ENCODE measurements at regions of chr15 and their contacts with region 1.

Region 1: GRCh38 chr15:70679919-70680231 is 83.5 kb downstream of the UACA start:
- DNase-seq: no peak
- ATAC-seq: no peak
- H3K4me3 Mint-ChIP-seq: no peak overlapping the region
- H3K27ac Mint-ChIP-seq: no peak overlapping the region
- H3K4me1 Mint-ChIP-seq: peaks cover 2% of the 10 kb centered on the region
- H3K27me3 Mint-ChIP-seq: no peaks in the 10 kb centered on the region

Region 2: DNA sequence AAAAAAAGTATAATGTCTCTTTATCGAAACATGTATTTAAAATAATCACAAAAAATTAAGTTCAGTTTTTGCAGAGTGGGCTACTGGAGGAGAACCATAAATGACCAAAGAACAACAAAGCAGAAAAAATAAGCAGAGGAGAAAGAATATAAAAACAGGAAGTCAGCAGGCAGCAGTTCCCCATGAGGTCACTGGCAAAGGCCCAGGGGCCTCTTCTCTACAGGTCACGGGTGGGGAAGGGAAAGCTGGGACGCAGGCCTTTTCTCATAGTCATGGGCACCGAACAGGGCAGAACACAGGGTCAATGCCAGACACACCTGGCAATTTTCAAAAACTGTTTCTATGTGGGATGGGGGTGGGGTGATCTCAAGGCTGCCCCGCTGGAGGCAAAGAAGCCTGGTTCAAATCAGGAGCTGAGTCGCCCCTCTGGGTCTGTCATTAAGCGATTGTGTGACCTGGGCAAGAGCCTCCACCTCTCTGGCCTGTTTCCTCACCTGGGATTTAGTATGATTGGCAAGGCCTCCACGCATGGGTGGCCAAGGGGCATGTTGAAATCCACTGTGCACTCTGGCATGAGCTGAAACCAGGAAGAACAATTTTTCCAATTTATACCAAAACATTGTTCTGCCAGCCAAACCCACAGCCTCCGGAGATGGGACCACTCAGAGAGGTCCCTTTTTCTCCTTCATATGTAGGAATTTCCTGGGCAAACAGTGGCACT is 127.3 kb after region 1 on chr15:
- CTCF ChIA-PET with region 1: interaction called, 18 read pairs
- POLR2A ChIA-PET with region 1: no interaction called
- intact Hi-C with region 1: loop called (anchors 1 to 5 kb)
- DNase-seq: no peak
- ATAC-seq: no peak
- H3K4me3 Mint-ChIP-seq: no peak overlapping the region
- H3K27ac Mint-ChIP-seq: no peak overlapping the region
- H3K4me1 Mint-ChIP-seq: peaks cover 2% of the 10 kb centered on the region
- H3K27me3 Mint-ChIP-seq: peaks cover 2% of the 10 kb centered on the region

Region 3: GRCh38 chr15:70812827-70813364 is 133.0 kb after region 1 on chr15:
- CTCF ChIA-PET with region 1: interaction called, 18 read pairs
- POLR2A ChIA-PET with region 1: no interaction called
- intact Hi-C with region 1: loop called (anchors 1 to 5 kb)
- DNase-seq: no peak
- ATAC-seq: no peak
- H3K4me3 Mint-ChIP-seq: no peak overlapping the region
- H3K27ac Mint-ChIP-seq: no peak overlapping the region
- H3K4me1 Mint-ChIP-seq: peaks cover 2% of the 10 kb centered on the region
- H3K27me3 Mint-ChIP-seq: no peaks in the 10 kb centered on the region